Ovary (tissue), 10 donors: ENCODE measurements at regions of chr7 and their contacts with region 1.

Region 1: DNA sequence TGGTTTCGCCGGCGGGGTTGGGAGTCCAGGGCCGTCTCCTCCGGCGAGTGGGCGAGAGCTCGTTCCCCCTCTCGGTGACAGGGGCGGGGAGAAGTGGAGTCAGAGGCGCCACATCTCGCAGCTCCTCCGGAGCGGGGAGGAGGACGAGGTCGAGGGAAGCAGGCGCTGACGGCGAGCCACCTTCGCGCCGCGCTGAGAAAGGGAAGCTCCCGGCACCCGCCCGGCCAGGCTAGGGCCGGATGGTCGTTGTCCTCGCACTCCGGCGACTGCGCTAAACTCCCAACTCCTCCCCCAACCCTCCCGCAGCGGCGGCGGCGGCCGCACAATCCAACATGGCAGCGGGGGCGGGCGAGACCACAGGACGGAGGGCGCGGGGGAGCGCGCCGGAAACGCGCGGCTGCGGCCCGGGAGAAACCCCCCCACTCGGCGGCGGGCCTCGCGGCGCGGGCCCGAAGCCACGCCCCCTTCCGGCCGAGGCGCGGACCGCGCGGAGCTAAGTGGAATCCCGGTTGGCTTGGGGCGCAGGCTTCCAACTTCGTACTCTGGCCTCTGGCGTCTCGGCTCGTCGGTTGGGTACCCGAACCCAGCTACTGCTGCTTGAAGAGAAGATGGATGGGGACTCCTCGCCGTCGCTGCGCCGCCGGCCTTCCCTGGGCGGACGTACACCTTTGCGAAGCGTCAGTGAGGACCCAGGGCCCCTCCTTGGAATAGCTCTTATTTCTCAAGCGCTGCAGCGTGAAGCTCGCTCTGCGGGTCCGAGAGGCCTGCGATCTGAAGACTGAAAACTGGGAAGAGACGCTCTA is at the start of gene WASL:
- DNase-seq: peak; percentile 91 to 96 (median 95)
- H3K4me3 ChIP-seq: peak within 1 kb of the TSS; percentile 96
- H3K27ac ChIP-seq: peak within 1 kb of the TSS; percentile 92 to 98
- H3K4me1 ChIP-seq: peaks cover 4% of the 10 kb centered on the region
- H3K27me3 ChIP-seq: no peaks in the 10 kb centered on the region
- CTCF ChIP-seq: peak in 2 of 3 donors; percentile 19 to 22
- EP300 ChIP-seq: no peak
- POLR2A ChIP-seq: peak; percentile 88
- total RNA-seq, gene WASL: 36.8 to 71.5 (median 50.8) TPM

Region 2: GRCh38 chr7:122896509-122896908 is 852.4 kb before region 1 on chr7:
- intact Hi-C with region 1: no loop called
- DNase-seq: no peak
- H3K4me3 ChIP-seq: no peak overlapping the region
- H3K27ac ChIP-seq: no peak overlapping the region
- H3K4me1 ChIP-seq: no peaks in the 10 kb centered on the region
- H3K27me3 ChIP-seq: no peaks in the 10 kb centered on the region
- CTCF ChIP-seq: no peak
- EP300 ChIP-seq: no peak
- POLR2A ChIP-seq: no peak

Region 3: GRCh38 chr7:123120286-123120685 is 628.6 kb before region 1 on chr7:
- intact Hi-C with region 1: no loop called
- DNase-seq: no peak
- H3K4me3 ChIP-seq: no peak overlapping the region
- H3K27ac ChIP-seq: no peak overlapping the region
- H3K4me1 ChIP-seq: no peaks in the 10 kb centered on the region
- H3K27me3 ChIP-seq: no peaks in the 10 kb centered on the region
- CTCF ChIP-seq: no peak
- EP300 ChIP-seq: no peak
- POLR2A ChIP-seq: no peak

Region 4: GRCh38 chr7:123692471-123692877 is 56.5 kb before region 1 on chr7:
- intact Hi-C with region 1: loop called in 1 of 4 experiments (anchors 10 kb)
- DNase-seq: no peak
- H3K4me3 ChIP-seq: no peak overlapping the region
- H3K27ac ChIP-seq: no peak overlapping the region
- H3K4me1 ChIP-seq: no peaks in the 10 kb centered on the region
- H3K27me3 ChIP-seq: no peaks in the 10 kb centered on the region
- CTCF ChIP-seq: no peak
- EP300 ChIP-seq: no peak
- POLR2A ChIP-seq: no peak

Region 5: DNA sequence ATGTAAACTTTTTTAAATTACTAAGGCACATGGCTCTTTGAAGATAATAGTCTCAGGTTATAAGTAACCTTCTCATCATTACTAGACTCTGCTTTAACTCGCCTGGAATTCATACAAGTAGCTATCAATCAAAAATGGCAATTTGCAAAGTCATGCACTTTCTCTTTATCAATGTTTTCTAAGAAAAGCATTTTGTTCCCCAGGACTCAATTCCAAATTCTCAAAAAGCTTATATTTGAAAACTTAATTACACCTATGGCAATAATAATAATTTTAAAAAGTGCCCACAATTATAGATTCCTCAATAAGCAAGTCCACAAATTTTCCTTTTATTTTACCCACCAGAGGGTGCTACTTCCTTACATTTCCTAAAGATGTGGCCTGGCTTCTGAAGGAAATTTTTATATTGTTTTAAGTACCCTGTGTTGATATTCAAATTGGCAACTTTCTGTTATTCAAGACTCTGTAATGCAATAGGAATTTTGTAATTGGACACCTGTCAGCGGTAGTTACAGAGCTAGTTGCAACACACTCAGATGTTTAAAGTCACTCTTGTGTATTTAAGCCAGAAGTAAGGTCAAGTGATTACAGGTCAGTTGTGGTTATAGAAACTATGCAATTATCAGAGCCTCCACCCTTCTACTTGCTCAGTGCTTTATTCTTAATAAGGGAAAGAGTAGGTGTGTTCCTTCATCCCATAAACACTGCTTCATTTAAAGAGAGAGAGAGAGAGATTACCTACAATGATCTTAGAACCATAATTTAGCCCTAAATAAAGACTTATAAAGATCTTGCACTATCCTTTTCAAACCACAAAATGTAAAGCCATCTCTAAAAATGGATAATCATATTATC is 49.0 kb after region 1 on chr7:
- intact Hi-C with region 1: loop called in 1 of 4 experiments (anchors 10 kb)
- DNase-seq: no peak
- H3K4me3 ChIP-seq: no peak overlapping the region
- H3K27ac ChIP-seq: no peak overlapping the region
- H3K4me1 ChIP-seq: no peaks in the 10 kb centered on the region
- H3K27me3 ChIP-seq: no peaks in the 10 kb centered on the region
- CTCF ChIP-seq: peak in 2 of 3 donors; percentile 43 to 48
- EP300 ChIP-seq: no peak
- POLR2A ChIP-seq: no peak

Region 6: GRCh38 chr7:123929107-123929506 is 180.2 kb after region 1 on chr7:
- intact Hi-C with region 1: no loop called
- DNase-seq: no peak
- H3K4me3 ChIP-seq: no peak overlapping the region
- H3K27ac ChIP-seq: no peak overlapping the region
- H3K4me1 ChIP-seq: no peaks in the 10 kb centered on the region
- H3K27me3 ChIP-seq: no peaks in the 10 kb centered on the region
- CTCF ChIP-seq: no peak
- EP300 ChIP-seq: no peak
- POLR2A ChIP-seq: no peak